ENCODE measurements at regions of chr3 and their contacts with region 1.

Region 1: GRCh38 chr3:42502429-42503250 is at the start of gene VIPR1:
- DNase-seq: peak; percentile 94
- H3K4me3 Mint-ChIP-seq: peak within 1 kb of the TSS; percentile 90
- H3K27ac Mint-ChIP-seq: peak within 1 kb of the TSS; percentile 76
- H3K4me1 Mint-ChIP-seq: peaks cover 35% of the 10 kb centered on the region
- H3K27me3 Mint-ChIP-seq: peaks cover 16% of the 10 kb centered on the region
- total RNA-seq, gene VIPR1: 6.3 to 8.4 TPM

Region 2: DNA sequence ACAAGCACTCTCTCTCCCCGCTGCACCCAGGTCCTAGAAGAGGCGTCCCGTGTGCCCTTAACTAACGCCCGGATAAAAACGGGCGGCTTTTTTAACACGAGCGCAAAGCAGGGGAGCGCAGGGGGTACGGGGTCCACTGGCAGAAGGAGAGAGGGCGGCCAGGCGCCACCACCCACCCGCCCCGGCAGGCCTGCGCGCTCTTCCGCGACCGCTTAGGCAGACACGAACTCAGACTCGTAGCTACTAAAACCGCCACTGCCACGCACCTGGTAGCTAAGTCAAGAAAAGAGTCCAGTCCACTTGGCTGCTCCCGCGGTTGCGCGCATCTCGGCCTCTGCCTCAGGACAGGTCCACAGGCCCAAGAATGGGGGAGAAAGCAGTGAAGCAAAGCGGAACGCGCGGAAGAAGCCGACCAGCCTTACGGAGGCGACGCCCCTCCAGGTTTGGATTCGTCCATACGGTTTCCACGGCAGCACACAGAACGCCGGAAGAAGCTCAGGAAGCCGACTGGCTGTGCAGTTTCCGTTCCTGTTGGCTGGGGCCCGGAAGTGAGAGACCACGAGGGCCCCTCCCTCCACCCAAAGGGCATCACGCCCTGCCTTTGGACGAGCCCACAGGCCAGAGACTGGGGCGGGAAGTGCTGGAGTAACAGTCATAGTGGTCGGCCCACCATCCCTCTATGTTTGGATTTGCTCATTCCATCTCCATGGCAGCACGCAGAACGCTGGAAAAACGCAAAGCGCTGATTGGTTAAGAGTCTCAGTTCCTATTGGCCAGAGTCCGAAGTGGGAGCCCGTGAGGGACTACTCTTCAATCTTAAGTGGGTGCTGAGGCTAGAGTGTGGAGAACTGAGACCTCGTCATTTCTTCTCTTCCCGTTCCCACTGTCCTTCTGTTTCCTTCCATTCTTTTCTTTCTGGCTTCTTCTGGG is 540.6 kb before region 1 on chr3 and contains the start of gene ULK4:
- CTCF ChIA-PET with region 1: no interaction called
- intact Hi-C with region 1: loop called (anchors 1 kb)
- DNase-seq: peak; percentile 97
- H3K4me3 Mint-ChIP-seq: peak within 1 kb of the TSS; percentile 99
- H3K27ac Mint-ChIP-seq: peak within 1 kb of the TSS; percentile 87
- H3K4me1 Mint-ChIP-seq: peaks cover 13% of the 10 kb centered on the region
- H3K27me3 Mint-ChIP-seq: no peaks in the 10 kb centered on the region
- total RNA-seq, gene ULK4: 8.5 to 9.1 TPM

Region 3: DNA sequence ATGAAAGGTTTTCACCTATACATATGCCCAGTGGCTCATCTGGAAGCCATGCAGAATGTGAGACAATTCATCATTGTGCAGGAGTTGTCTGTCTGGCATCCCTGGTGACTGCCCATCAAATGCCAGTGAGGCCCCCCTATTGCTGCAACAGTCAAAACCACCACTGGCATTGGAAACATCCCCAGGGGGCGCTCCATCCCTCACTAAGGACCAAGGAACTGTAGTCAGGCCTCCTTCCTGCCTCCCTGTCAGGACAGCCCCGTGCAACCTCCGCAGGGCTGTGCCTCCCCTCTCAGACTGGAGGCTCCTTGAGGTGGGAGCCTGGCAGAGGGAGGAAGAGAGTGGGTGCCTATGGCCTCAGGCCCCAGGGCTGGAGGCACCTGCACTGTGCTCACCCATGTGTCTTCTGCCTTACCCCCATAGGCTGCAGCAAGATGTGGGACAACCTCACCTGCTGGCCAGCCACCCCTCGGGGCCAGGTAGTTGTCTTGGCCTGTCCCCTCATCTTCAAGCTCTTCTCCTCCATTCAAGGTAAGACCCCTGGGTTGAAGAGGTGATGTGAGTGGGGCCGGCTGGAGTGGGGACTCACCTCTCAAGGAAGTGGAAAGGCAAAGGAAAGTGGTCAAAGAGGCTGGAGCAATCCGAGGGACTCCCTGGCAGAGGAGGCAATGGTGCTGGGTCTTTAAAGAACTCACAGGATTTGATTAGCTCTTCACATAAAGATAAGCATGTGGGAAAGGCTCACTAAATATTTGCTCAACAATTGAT is 16.3 kb after region 1 on chr3:
- CTCF ChIA-PET with region 1: interaction called, 5 read pairs
- intact Hi-C with region 1: loop called (anchors 1 kb)
- DNase-seq: peak; percentile 65
- H3K4me3 Mint-ChIP-seq: no peak overlapping the region
- H3K27ac Mint-ChIP-seq: peak overlapping the region; percentile 2
- H3K4me1 Mint-ChIP-seq: peaks cover 30% of the 10 kb centered on the region
- H3K27me3 Mint-ChIP-seq: no peaks in the 10 kb centered on the region

Region 4: DNA sequence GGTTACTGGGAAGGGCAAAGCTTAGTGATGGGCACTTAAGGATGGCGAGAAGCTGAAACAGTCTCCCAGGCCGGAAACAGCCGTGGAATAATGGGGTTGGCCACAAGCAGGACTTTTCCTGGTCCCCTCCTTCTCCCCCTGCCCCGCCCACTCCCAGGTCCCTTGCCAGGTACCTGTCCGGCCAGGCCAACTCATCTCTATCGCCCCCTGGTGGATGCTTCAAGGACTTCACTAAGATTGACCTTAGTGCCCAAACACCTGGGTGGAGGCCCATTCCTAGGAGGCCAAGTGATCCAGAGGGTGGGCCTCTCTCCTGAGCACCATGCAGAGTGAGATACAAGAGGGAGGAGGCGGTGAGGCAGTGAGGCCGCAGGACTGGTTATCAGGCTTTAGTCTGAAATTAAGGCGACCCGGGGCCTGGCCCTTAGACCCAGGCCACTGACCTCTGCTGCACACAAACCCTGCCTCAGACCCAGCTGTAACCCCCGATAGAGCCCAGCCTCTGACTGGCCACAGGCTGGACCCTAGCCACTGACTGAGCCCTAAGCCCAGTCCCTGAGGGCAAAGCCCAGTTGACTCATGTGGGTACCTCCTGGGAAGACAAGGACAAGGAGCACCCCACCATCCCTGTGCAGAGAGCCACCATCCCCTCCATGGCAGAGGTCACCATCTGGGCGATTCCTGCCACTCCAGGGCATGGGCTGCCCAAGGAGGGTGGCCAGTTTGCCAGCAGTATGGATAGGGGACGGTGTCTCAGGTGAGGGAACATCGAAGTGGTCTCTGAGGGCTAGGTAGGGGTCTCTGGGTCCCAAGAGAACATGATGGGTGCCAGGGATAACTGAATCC is 37.5 kb after region 1 on chr3:
- CTCF ChIA-PET with region 1: interaction called, 201 read pairs
- intact Hi-C with region 1: loop called (anchors 1 kb)
- DNase-seq: peak; percentile 78
- H3K4me3 Mint-ChIP-seq: no peak overlapping the region
- H3K27ac Mint-ChIP-seq: no peak overlapping the region
- H3K4me1 Mint-ChIP-seq: peaks cover 5% of the 10 kb centered on the region
- H3K27me3 Mint-ChIP-seq: no peaks in the 10 kb centered on the region

Region 5: DNA sequence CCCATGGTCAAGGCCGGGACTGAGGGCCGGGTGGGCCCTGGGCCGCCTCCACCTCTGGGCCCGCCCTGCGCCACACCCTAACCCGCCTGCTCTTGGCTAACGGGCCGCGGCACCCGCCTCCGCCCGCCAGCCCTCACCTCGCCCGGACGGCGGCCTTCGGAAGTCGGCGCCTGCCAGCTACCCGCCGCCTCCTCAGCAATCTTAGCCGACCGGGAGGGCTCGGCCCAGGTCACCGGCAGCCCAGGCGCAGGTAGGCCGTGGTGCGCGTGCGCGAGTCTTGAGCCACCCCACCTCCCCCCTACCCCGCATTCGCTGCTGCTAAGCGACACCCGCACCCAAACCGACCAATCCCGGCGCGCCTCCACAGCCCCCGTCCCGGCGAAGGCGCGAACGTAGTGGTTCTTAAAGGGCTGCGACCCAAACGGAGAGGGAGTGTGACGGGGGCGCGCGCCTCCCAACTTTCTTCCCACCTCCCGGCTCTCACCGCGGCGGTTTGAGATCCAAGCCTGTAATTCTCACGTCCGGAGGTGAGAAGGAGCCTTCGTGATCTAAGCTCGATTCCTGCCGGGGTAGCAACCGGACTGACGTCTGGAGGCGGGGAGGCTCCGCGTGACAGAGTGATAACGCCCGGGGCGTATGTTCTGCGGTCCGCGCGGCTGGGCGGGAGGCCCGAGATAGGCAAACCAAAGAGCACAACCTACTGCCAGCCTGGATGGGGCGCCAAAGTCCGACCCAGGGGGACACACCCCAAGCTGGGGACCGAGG is 79.3 kb after region 1 on chr3 and contains the start of gene SEC22C:
- CTCF ChIA-PET with region 1: interaction called, 3 read pairs
- intact Hi-C with region 1: loop called (anchors 1 kb)
- DNase-seq: peak; percentile 97
- H3K4me3 Mint-ChIP-seq: peak within 1 kb of the TSS; percentile 90
- H3K27ac Mint-ChIP-seq: peak within 1 kb of the TSS; percentile 93
- H3K4me1 Mint-ChIP-seq: peaks cover 39% of the 10 kb centered on the region
- H3K27me3 Mint-ChIP-seq: no peaks in the 10 kb centered on the region
- total RNA-seq, gene SEC22C: 41.2 to 45.9 TPM

Region 6: DNA sequence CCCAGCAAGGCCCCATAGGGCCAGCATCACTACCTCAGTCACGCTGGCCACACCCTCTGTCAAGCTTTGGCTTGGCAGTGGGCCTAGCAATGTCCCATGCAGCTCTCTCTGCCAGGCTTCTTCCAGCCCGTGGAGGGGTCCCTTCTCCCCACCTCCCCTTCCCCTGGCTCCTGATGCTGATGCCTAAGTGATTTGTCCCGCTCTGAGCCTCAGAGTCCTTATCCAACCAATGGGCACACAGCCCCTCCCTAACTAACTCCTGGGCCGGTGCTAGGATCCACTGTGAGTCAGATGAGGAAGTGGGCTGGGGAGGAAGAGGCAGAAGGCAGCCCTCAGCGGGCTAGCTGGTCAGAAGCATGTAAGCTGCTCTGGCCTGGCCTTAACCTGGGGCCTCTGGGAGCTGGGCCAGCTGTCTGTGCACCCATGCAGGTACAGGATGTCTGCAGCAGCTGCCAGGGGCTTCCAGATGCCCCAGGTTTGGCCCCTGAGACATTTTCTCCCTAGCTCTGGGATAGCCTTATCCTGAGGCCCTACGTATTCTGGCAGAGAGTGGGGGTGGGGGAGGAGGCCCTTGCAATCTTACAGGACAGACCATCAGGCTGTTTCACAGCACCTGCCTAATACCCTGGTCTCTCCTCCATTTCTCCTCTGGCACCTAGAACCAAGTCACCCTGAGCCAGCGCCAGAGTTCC is 150.1 kb after region 1 on chr3:
- CTCF ChIA-PET with region 1: no interaction called
- intact Hi-C with region 1: no loop called
- DNase-seq: no peak
- H3K4me3 Mint-ChIP-seq: peak overlapping the region; percentile 41
- H3K27ac Mint-ChIP-seq: no peak overlapping the region
- H3K4me1 Mint-ChIP-seq: peaks cover 2% of the 10 kb centered on the region
- H3K27me3 Mint-ChIP-seq: no peaks in the 10 kb centered on the region

Region 7: DNA sequence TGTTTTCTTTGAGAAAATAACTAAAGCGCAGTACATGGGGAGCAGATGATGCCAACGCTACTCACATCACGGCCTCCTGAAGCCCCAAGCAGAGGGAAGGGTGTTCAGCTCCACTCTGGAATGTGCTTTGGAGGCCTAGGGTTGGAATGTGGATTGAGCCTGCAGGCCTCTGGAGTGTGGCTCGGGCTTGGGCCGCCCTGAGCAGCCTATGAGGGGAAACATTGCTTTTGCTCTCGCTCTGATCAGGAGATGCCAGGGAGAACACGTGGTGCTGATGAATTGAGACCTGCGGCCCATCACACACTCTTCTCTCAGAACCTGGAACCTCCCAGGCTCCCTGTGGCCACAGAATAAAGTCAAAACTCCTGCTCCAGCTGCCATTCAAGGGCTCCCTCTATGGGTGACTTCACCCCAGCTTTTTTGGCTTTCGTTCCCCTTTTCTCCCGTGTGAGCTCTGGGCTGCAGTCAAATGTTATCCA is 247.2 kb after region 1 on chr3:
- CTCF ChIA-PET with region 1: interaction called, 3 read pairs
- intact Hi-C with region 1: loop called (anchors 1 kb)
- DNase-seq: peak; percentile 29
- H3K4me3 Mint-ChIP-seq: no peak overlapping the region
- H3K27ac Mint-ChIP-seq: no peak overlapping the region
- H3K4me1 Mint-ChIP-seq: peaks cover 26% of the 10 kb centered on the region
- H3K27me3 Mint-ChIP-seq: no peaks in the 10 kb centered on the region